Activated naive CD4-positive, alpha-beta T cell treated with anti-CD3 and anti-CD28 coated beads, Interleukin-2, amount 10 ng/mL, durations not matched to agents 7 days and 5 days (primary cell): ENCODE measurements at regions of chr2 and their contacts with region 1.

Region 1: GRCh38 chr2:95076784-95077529 is 44.7 kb downstream of the MRPS5 start:
- DNase-seq: peak; percentile 98
- H3K4me3 Mint-ChIP-seq: peak overlapping the region; percentile 95
- H3K27ac Mint-ChIP-seq: peak overlapping the region; percentile 99
- H3K4me1 Mint-ChIP-seq: peaks cover 83% of the 10 kb centered on the region
- H3K27me3 Mint-ChIP-seq: peaks cover 5% of the 10 kb centered on the region

Region 2: DNA sequence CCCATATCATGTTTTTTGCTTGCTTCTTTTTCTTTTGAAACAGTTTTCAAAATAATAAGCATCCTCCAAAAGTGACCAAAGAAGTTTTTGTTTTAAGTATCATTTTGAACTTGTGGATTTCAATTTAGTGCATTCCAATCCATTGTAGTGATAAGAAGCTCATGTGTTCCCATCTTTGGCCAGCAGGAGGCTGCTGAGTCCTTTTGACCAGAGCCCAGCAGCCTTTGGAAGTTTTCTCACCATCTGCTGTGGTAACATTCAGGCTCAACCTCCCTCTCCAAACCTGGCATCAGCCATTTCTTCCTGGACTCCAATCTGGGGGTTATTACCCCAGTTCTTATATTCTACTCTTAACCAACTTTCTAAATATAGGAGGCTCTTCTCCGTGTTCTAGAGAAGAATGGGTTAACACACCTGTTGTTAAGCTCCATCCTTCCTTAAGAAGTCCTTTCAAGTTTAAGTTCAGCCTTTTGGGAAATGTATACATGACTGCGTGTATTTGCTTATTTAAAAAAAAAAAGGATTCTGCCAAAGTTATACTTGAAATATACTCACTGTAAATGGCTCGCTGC is 90.5 kb before region 1 on chr2:
- CTCF ChIA-PET with region 1: interaction called, 16 read pairs
- DNase-seq: peak; percentile 70
- H3K4me3 Mint-ChIP-seq: no peak overlapping the region
- H3K27ac Mint-ChIP-seq: no peak overlapping the region
- H3K4me1 Mint-ChIP-seq: peaks cover 3% of the 10 kb centered on the region
- H3K27me3 Mint-ChIP-seq: peaks cover 29% of the 10 kb centered on the region

Region 3: DNA sequence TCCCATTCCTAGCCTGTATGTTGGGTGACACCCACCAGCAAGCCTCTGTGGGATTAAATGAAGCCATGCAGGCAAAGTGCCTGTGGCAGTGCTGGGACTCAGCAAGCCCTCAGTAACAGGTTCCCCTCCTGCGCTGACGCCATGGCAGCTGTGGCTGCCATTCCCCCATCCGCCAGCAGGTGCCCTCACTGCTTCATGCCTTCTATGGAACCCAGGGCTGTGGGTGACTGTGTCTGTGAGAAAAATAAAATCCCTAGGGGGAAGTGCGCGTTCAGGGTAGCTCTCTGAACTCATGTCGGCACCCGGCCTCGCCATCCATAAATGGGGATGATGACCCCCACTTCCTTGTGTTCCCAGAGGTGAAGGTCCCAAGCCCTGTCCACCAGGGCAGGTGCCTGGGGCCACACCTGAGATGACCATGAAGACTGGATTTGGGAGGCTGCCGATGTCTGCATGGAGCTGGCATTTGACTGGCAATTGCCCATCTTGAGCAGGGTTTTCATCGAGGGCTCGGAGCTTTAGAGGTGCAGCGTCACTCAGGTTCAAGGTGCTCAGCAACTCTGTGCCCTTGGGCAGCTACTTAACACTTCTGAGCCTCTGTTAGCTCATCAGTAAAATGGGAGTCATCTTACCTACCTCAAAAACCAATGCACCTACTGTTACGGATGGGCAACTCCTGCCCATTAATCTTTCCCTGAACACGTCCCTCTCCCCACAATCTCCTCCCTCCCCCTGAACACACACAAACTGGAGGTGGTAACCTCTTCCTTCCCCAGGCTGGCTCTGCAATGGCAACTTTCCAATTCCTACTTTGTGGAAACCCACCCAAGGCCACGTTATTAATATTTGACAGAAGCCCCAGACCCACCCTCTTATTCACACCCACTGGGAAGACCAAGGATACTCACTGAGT is 54.4 kb before region 1 on chr2:
- CTCF ChIA-PET with region 1: interaction called, 489 read pairs
- DNase-seq: peak; percentile 91
- H3K4me3 Mint-ChIP-seq: peak overlapping the region; percentile 100
- H3K27ac Mint-ChIP-seq: peak overlapping the region; percentile 87
- H3K4me1 Mint-ChIP-seq: peaks cover 54% of the 10 kb centered on the region
- H3K27me3 Mint-ChIP-seq: peaks cover 8% of the 10 kb centered on the region

Region 4: GRCh38 chr2:95115418-95115817 is 38.5 kb after region 1 on chr2:
- CTCF ChIA-PET with region 1: interaction called, 102 read pairs
- DNase-seq: peak; percentile 88
- H3K4me3 Mint-ChIP-seq: no peak overlapping the region
- H3K27ac Mint-ChIP-seq: peak overlapping the region; percentile 47
- H3K4me1 Mint-ChIP-seq: peaks cover 44% of the 10 kb centered on the region
- H3K27me3 Mint-ChIP-seq: no peaks in the 10 kb centered on the region